ENCODE measurements at regions of chr12 and their contacts with region 1.

Region 1: DNA sequence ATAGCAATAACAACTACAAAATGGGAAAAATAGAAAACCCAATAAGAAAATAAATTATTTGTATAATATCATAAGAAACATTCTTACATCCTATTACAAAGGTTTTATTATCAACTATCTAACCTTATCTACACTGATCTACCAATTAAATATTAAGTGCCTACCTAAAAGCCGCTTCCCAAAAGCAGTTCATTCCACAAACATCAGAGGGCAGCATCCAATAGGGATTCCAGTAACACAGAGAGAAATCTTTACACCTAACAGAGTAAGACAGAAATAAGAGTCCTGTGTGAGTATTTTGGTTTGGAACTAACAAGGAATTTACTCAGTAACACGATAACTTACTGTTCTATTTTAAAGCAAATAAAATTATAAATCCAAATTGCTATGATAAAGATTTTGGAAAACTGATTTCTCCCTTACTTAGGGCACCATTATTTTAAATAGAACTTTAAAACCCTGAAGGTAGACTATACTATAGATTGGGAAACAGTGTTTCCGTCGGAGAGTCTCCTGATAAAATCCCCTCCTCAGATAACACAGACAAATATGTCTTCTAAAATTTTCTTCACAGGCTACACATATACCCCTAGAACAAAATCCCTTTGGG is 15.0 kb downstream of the GXYLT1 start:
- DNase-seq: peak; percentile 63
- ATAC-seq: peak; percentile 70
- H3K4me3 ChIP-seq: no peak overlapping the region
- H3K27ac ChIP-seq: no peak overlapping the region
- H3K4me1 ChIP-seq: peaks cover 15% of the 10 kb centered on the region
- H3K27me3 ChIP-seq: no peaks in the 10 kb centered on the region
- CTCF ChIP-seq: peak; percentile 72
- EP300 ChIP-seq: no peak
- POLR2A ChIP-seq: no peak
- RAD21 ChIP-seq: peak; percentile 76

Region 2: GRCh38 chr12:42325653-42326474 is 196.2 kb after region 1 on chr12 and contains the starts of genes PPHLN1 and ZCRB1:
- CTCF ChIA-PET with region 1: no interaction called
- POLR2A ChIA-PET with region 1: no interaction called
- in situ Hi-C with region 1: loop called (anchors 5 kb)
- intact Hi-C with region 1: no loop called
- DNase-seq: peak; percentile 83
- ATAC-seq: peak; percentile 97
- H3K4me3 ChIP-seq: peak within 1 kb of the TSS; percentile 81 to 98 (median 92)
- H3K27ac ChIP-seq: peak within 1 kb of the TSS; percentile 88
- H3K4me1 ChIP-seq: peaks cover 51% of the 10 kb centered on the region
- H3K27me3 ChIP-seq: peaks cover 0 to 3% of the 10 kb centered on the region in 2 experiments; a peak in 1 of 5 replicates
- CTCF ChIP-seq: no peak
- EP300 ChIP-seq: no peak
- POLR2A ChIP-seq: peak; percentile 86 to 88
- RAD21 ChIP-seq: peak; percentile 37; the same call in 1 of the 2 replicates
- total RNA-seq, gene PPHLN1: 66.0 and 84.1 TPM in 2 replicates
- total RNA-seq, gene ZCRB1: 49.8 and 76.2 TPM in 2 replicates

Region 3: DNA sequence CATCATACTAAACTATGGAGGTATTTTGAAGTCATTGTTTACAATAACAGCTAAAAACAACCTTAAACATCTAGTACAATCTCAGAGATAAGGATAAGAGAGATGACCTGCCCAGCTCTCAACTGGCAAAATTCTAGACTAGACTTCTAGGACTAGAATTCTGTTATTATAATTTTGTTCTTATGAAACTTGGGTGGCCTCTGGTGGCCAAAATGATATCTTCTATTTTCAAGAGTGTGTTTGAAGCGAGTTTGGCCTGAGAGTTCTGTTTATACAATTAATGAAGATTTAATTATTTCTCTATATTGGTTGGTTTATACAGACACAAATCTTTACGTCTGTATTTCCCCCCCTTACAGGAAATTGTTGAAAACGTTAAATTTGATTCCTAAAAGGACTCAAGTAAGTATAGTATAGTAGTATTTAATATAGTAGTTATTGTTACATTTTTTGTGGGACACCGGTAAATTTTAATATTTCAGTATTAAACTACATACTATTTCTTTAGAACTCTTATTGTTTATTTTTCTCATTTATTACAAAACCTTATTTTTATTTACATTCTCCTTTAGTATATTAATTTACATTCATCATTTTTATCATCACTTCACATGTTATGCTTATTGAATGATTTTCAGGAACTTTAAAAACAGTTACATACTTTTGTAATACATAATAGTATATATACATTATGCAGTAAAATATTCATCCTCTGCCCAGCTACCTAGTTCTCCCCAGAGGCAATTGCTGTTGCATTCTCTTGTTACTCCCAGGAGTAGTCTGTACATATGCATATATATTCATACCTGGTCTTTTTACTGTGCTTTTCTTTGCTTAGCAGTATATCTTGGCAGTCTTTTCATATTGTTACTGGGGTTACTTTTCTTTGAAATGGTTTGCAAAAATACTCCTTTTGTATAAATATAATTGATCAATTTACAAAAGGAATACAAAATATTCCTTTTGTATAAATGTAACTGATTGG is 202.9 kb after region 1 on chr12:
- CTCF ChIA-PET with region 1: interaction called, 16 read pairs
- POLR2A ChIA-PET with region 1: no interaction called
- in situ Hi-C with region 1: loop called (anchors 5 kb)
- intact Hi-C with region 1: loop called (anchors 1 kb)
- DNase-seq: peak; percentile 34
- ATAC-seq: peak; percentile 51
- H3K4me3 ChIP-seq: no peak overlapping the region
- H3K27ac ChIP-seq: no peak overlapping the region
- H3K4me1 ChIP-seq: peaks cover 45% of the 10 kb centered on the region
- H3K27me3 ChIP-seq: no peaks in the 10 kb centered on the region
- CTCF ChIP-seq: peak; percentile 52
- EP300 ChIP-seq: no peak
- POLR2A ChIP-seq: no peak
- RAD21 ChIP-seq: 0 out of 2 replicates have a peak, but pooled peaks have one; percentile 26